ENCODE measurements at regions of chr4 and their contacts with region 1.

Region 1: DNA sequence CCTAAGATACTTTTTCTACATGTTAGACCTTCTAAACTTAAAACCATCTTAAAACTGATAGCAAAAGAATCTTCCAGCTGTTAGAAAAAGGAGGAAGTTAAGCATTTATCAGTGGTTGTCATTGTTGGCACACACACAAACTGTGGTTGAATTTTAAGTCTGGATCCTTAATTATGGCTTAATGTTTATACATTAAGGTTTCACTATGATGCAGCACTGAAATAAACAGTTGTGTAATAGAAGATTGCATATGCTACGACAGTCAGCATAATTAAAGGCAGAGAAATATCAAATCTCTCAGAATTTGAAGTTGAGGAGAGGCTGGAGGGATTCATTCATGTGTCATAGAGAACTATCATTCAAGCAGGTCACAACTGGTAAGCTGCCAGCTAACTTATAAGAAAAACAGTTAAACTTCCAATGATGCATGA is 32.3 kb downstream of the ADGRA3 start:
- DNase-seq: peak; percentile 87
- H3K4me3 Mint-ChIP-seq: peak overlapping the region; percentile 36
- H3K27ac Mint-ChIP-seq: peak overlapping the region; percentile 90
- H3K4me1 Mint-ChIP-seq: peaks cover 48% of the 10 kb centered on the region
- H3K27me3 Mint-ChIP-seq: no peaks in the 10 kb centered on the region
- CTCF ChIP-seq: no peak

Region 2: GRCh38 chr4:22454955-22455354 is 28.6 kb before region 1 on chr4:
- CTCF ChIA-PET with region 1: no interaction called
- POLR2A ChIA-PET with region 1: no interaction called
- intact Hi-C with region 1: no loop called
- DNase-seq: no peak
- H3K4me3 Mint-ChIP-seq: no peak overlapping the region
- H3K27ac Mint-ChIP-seq: no peak overlapping the region
- H3K4me1 Mint-ChIP-seq: peaks cover 7% of the 10 kb centered on the region
- H3K27me3 Mint-ChIP-seq: no peaks in the 10 kb centered on the region
- CTCF ChIP-seq: no peak

Region 3: DNA sequence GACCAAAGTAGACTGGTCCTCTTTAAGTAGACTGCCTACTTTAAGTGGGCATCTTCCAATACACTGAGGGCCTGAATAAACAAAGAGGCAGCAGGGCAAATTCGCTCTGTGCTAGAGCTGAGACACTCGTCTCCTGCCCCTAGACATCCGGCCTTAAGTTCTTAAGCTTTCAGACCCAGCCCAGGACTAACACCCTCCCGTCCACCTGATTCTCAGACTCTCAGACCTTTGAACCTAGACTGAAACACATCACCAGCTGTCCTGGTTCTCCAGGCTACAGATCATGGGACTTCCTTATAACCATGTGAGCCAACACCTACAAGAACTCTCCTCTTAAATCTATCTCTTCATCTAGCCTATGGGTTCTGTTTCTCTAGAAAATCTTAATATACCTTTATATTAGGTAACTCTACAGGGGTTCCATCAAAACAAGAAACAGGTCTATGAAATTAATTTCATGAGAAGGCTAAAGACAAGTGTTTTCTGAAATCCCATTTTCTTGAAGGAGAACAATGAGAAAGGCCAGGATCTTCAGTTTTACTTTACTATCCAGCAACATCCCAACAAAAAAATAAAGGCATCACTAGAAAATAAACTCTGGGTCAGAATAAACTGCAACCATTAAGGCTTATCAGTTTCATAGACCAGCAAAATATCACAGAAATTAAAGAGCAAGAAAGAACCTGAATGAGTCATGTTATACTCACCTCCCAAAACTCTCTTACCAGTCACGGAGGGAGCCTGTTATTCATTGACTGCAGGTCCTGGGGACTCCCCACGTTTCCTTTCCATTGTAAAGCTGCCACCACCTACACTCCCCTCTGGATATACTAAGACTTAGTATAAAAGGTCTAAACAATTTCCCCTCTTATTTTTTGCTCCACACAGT is 17.5 kb after region 1 on chr4:
- CTCF ChIA-PET with region 1: interaction called, 8 read pairs
- POLR2A ChIA-PET with region 1: interaction called, 145 read pairs
- intact Hi-C with region 1: no loop called
- DNase-seq: peak; percentile 87
- H3K4me3 Mint-ChIP-seq: peak overlapping the region; percentile 24
- H3K27ac Mint-ChIP-seq: no peak overlapping the region
- H3K4me1 Mint-ChIP-seq: peaks cover 24% of the 10 kb centered on the region
- H3K27me3 Mint-ChIP-seq: no peaks in the 10 kb centered on the region
- CTCF ChIP-seq: no peak